Activated T-helper 2 cell treated with anti-CD3 and anti-CD28 coated beads, Interferon-gamma antibody, Interleukin-2, Interleukin-4, amounts not matched to agents 10 μg/mL and 5 μg/mL and 100 μg/mL, durations not matched to agents 14 hours and 24 hours and 36 hours (primary cell): ENCODE measurements at regions of chr4 and their contacts with region 1.

Region 1: DNA sequence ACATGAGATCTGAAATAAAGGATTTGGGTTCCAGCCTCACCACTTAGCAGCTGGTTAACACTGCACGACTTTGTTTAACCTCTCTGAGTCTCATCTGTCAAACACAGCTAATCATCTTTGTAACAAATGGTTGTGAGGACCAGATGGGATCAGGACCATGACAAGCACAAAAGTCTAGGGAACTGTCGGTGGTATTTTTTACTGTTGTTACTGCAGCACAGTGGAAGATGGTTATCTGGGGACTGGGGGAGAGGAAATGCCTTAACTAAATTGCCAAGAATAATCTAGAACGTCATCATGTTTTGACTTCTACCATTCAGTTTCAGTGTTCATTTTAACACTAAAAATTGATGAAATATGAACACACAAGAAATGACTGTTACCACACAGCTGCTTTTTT is 99.5 kb downstream of the ADGRA3 start:
- DNase-seq: no peak
- H3K4me3 Mint-ChIP-seq: peak overlapping the region; percentile 53
- H3K27ac Mint-ChIP-seq: peak overlapping the region; percentile 73
- H3K4me1 Mint-ChIP-seq: peaks cover 35% of the 10 kb centered on the region
- H3K27me3 Mint-ChIP-seq: no peaks in the 10 kb centered on the region

Region 2: GRCh38 chr4:22268350-22269025 is 147.9 kb before region 1 on chr4:
- intact Hi-C with region 1: no loop called
- DNase-seq: no peak
- H3K4me3 Mint-ChIP-seq: no peak overlapping the region
- H3K27ac Mint-ChIP-seq: no peak overlapping the region
- H3K4me1 Mint-ChIP-seq: no peaks in the 10 kb centered on the region
- H3K27me3 Mint-ChIP-seq: no peaks in the 10 kb centered on the region

Region 3: GRCh38 chr4:22434895-22435294 is 18.5 kb after region 1 on chr4:
- intact Hi-C with region 1: loop called (anchors 2 kb)
- DNase-seq: no peak
- H3K4me3 Mint-ChIP-seq: no peak overlapping the region
- H3K27ac Mint-ChIP-seq: no peak overlapping the region
- H3K4me1 Mint-ChIP-seq: peaks cover 18% of the 10 kb centered on the region
- H3K27me3 Mint-ChIP-seq: no peaks in the 10 kb centered on the region

Region 4: DNA sequence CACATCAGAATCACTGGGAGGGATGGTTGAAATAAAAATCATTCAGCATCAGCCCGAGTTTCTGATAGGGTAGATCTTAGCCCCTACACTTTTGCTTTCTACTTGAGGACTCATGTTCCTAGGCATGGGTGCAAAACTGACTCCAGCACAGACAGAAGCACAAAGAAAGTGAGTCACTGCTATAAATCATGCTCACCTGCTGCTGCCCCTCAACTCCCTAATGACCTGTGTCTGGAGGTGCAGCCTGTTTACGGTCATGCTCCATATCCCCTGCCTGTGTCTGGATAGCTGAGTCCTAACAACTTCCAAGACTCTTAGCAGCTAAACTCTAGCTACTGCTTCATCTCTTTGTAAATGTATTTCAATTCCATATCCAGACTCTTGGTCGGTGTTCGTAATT is 41.7 kb after region 1 on chr4:
- intact Hi-C with region 1: loop called (anchors 5 kb)
- DNase-seq: no peak
- H3K4me3 Mint-ChIP-seq: no peak overlapping the region
- H3K27ac Mint-ChIP-seq: no peak overlapping the region
- H3K4me1 Mint-ChIP-seq: peaks cover 32% of the 10 kb centered on the region
- H3K27me3 Mint-ChIP-seq: no peaks in the 10 kb centered on the region